PC-9 (cell line): ENCODE measurements at regions of chr17 and their contacts with region 1.

Region 1: GRCh38 chr17:78923660-78924453 is 1.3 kb downstream of the TIMP2 start:
- DNase-seq: peak; percentile 77 to 88
- H3K4me3 ChIP-seq: peak overlapping the region; percentile 73
- H3K27ac ChIP-seq: no peak overlapping the region
- H3K4me1 ChIP-seq: no peaks in the 10 kb centered on the region
- H3K27me3 ChIP-seq: no peaks in the 10 kb centered on the region
- CTCF ChIP-seq: no peak

Region 2: GRCh38 chr17:77990301-77990700 is 933.6 kb before region 1 on chr17:
- CTCF ChIA-PET with region 1: no interaction called
- POLR2A ChIA-PET with region 1: no interaction called
- intact Hi-C with region 1: no loop called
- DNase-seq: no peak
- H3K4me3 ChIP-seq: no peak overlapping the region
- H3K27ac ChIP-seq: no peak overlapping the region
- H3K4me1 ChIP-seq: no peaks in the 10 kb centered on the region
- H3K27me3 ChIP-seq: peaks cover 88% of the 10 kb centered on the region
- CTCF ChIP-seq: no peak

Region 3: GRCh38 chr17:78873519-78874340 is 50.1 kb before region 1 on chr17:
- CTCF ChIA-PET with region 1: no interaction called
- POLR2A ChIA-PET with region 1: no interaction called
- intact Hi-C with region 1: loop called (anchors 2 kb)
- DNase-seq: peak; percentile 91
- H3K4me3 ChIP-seq: no peak overlapping the region
- H3K27ac ChIP-seq: peak overlapping the region; percentile 56
- H3K4me1 ChIP-seq: peaks cover 34% of the 10 kb centered on the region
- H3K27me3 ChIP-seq: no peaks in the 10 kb centered on the region
- CTCF ChIP-seq: no peak

Region 4: GRCh38 chr17:78899361-78900260 is 24.2 kb before region 1 on chr17:
- CTCF ChIA-PET with region 1: no interaction called
- POLR2A ChIA-PET with region 1: no interaction called
- intact Hi-C with region 1: loop called (anchors 1 kb)
- DNase-seq: peak; percentile 63 to 90
- H3K4me3 ChIP-seq: no peak overlapping the region
- H3K27ac ChIP-seq: no peak overlapping the region; the same call in 1 of the 2 replicates
- H3K4me1 ChIP-seq: peaks cover 14% of the 10 kb centered on the region
- H3K27me3 ChIP-seq: no peaks in the 10 kb centered on the region
- CTCF ChIP-seq: no peak

Region 5: DNA sequence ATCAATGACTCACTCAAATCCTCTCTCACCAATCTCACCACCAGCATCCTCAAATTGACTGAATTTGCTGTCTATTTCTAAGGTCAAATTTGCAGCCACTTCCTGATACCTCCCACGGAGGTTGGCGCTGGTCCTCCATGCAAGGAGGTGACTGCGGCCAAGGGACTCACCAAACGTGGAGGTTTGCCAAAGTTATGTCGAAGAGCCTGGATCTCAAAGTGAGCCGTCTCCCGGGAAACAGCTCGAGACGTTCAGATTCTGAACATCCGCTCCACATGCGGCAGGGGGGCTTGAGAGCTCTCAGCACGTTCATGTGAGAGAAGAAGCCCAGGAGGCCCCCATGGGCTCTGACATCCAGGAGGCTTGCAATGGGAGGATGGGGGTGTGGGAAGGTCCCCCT is 33.3 kb after region 1 on chr17:
- CTCF ChIA-PET with region 1: no interaction called
- POLR2A ChIA-PET with region 1: no interaction called
- intact Hi-C with region 1: loop called (anchors 5 kb)
- DNase-seq: peak in 1 of 2 experiments; percentile 37
- H3K4me3 ChIP-seq: no peak overlapping the region
- H3K27ac ChIP-seq: no peak overlapping the region
- H3K4me1 ChIP-seq: peaks cover 50% of the 10 kb centered on the region
- H3K27me3 ChIP-seq: no peaks in the 10 kb centered on the region
- CTCF ChIP-seq: no peak

Region 6: DNA sequence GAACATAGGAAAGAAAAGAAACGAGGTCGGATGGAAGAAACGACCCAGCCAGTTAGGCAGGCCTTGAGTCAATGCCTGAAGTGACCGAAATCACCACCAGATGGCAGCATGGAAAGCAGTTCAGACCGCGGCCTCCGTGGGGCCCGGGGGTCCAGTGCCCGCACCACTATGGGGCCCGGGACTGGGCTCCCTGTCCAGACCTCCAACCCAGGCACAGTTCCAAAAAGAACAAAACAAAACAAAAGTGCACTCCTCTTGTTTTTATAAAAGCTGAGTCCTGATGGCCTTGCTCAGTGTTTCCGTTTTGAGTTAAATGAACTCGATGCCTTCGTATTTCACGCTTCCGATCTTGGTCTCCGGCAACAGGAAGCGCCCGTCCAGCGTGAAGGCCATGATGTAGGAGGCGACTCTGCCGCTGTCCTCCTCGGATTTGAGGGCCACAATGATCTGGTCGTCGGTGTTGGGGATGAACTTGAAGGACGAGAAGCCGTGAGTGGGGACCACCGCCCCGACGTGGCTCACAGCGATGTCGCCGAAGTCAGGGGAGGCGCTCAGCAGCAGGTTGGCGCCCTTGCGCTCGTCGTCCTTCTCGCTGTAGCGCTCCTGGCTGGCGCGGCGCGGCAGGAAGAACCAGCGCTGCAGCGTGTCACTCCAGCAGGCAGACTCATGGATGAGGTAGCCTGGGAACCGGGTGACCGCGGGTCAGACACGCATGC is 69.5 kb after region 1 on chr17:
- CTCF ChIA-PET with region 1: no interaction called
- POLR2A ChIA-PET with region 1: interaction called, 20 read pairs
- intact Hi-C with region 1: no loop called
- DNase-seq: peak in 1 of 2 experiments; percentile 44
- H3K4me3 ChIP-seq: no peak overlapping the region
- H3K27ac ChIP-seq: no peak overlapping the region
- H3K4me1 ChIP-seq: peaks cover 35% of the 10 kb centered on the region
- H3K27me3 ChIP-seq: no peaks in the 10 kb centered on the region
- CTCF ChIP-seq: peak; percentile 78